ENCODE measurements at regions of chr5 and their contacts with region 1.

Region 1: GRCh38 chr5:14739538-14739937 is 75.0 kb downstream of the OTULIN start:
- ATAC-seq: peak in 2 of 8 experiments; percentile 95
- H3K4me3 ChIP-seq: no peak overlapping the region
- H3K27ac ChIP-seq: no peak overlapping the region
- H3K4me1 ChIP-seq: peaks cover 3 to 17% of the 10 kb centered on the region in 2 donors

Region 2: GRCh38 chr5:14830210-14831005 is 90.9 kb after region 1 on chr5:
- in situ Hi-C with region 1: no loop called
- ATAC-seq: no peak
- H3K4me3 ChIP-seq: no peak overlapping the region
- H3K27ac ChIP-seq: no peak overlapping the region
- H3K4me1 ChIP-seq: no peaks in the 10 kb centered on the region

Region 3: DNA sequence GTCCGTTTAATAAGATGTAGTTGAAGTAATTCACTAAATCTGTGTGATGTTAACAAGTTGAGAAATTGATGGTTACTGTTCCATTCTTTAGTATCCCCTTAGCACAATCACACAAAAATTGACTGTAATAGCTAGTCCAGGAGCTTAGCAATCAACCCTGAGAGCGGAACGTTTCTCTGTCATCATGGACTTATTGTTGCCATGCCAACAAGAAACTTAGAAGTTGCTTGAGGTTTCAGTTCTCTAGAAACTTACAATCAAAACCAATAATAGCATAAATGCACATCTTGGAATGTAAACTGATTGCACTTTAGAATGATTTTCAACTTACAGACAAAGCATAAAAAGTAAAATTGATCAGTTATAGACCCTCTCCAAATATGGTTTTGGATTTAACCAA is 257.5 kb after region 1 on chr5:
- in situ Hi-C with region 1: loop called in 6 of 9 experiments (anchors 10 to 25 kb)
- ATAC-seq: no peak
- H3K4me3 ChIP-seq: no peak overlapping the region
- H3K27ac ChIP-seq: no peak overlapping the region
- H3K4me1 ChIP-seq: no peaks in the 10 kb centered on the region

Region 4: DNA sequence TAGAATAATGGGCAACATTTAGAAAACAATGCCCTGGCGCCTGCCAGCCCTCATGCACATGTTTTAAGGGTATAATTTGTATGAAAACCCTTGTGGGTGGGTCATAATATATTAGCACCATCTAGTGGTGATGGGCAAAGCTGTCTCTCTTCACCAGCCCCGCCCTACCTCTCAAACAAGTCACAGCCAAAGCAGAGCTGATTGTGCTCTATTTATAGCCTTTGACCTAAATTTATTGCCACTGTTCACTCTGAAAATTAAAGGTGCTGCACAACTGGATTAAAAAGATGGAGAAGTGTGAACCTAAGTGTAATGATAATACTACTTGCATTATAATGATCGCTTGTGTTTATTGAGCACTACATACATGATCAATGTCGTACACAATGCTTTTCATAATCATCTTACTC is 264.0 kb after region 1 on chr5:
- in situ Hi-C with region 1: loop called in 6 of 9 experiments (anchors 10 to 25 kb)
- ATAC-seq: peak; percentile 60 to 94 (median 84)
- H3K4me3 ChIP-seq: no peak overlapping the region
- H3K27ac ChIP-seq: no peak overlapping the region
- H3K4me1 ChIP-seq: peaks cover 0 to 6% of the 10 kb centered on the region in 2 donors

Region 5: DNA sequence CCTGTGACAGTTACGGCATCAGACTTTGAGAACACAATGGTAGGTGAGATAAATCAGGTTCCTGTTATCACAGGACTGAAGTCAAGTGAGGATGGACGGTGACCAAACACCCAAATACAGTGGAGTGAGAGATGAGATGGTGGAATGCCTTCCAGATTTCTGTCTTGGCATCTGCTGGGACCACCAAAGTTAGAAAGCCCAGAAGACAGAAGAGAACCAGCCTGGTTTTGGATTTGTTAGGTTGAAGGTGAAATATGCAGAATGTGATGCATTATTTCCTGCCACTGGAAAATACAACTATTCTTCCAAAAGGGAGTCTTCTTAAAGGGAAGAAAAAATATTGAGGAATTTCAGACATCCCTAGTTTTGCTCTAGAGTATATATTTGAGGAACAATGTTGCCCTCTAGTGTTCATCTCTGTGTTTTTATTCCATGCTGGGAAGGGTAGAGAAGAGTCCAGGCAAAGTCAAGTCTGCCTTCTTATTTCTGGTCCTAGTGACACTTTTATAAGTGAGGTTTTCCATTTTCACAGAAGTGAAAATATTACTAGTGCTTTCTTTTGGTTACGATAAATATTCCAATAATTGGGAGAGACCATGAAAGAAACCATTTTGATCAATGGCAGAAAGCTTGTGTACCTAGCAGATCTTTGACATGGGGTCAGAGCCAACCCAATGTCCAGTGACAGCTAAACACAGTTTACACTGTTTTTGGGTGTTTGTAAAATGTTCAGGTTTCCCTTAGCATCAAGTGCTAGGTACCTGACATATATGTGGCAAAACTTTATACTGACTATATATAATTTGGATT is 274.3 kb after region 1 on chr5:
- in situ Hi-C with region 1: loop called in 5 of 9 experiments (anchors 10 to 25 kb)
- ATAC-seq: peak; percentile 49 to 97 (median 80)
- H3K4me3 ChIP-seq: no peak overlapping the region
- H3K27ac ChIP-seq: no peak overlapping the region
- H3K4me1 ChIP-seq: peaks cover 0 to 2% of the 10 kb centered on the region in 2 donors

Measured in motor neuron (in vitro differentiated cells).